Colonic mucosa (tissue), 4 donors: ENCODE measurements at regions of chr12 and their contacts with region 1.

Region 1: DNA sequence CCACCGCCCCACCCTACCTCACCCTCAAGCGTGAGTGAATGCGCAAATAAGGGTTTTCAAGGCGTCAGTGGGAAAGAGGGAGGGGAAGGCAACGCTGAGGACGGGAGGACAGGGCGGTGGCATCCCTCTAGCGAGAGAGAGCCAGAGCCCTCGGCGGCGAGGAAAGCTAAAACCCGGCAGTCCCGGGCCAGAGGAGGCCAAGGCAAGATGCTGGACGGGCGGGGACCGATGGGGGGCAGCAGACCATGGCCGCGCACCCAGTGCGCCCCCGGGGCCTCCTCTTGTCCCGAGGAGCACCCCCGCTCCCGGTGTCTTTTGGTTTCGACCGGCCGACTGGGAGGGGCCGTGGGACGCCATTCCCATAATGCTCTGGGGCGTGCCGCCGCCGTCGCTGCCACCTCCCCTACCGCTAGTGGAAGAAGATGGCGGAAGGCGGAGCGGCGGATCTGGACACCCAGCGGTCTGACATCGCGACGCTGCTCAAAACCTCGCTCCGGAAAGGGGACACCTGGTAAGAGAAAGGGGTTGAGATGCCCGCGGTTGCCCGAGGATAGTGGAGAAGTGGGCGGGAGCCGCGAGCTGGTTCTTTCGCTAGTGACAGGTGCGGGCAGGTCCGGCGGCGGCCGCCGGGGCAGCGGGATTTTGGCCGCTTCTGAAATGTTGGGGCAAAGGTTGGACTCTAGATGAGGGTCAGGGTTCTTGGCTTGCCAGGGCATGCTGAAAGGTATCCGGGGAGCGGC is at the start of gene USP15:
- DNase-seq: peak; percentile 95
- H3K4me3 ChIP-seq: peak within 1 kb of the TSS; percentile 96
- H3K27ac ChIP-seq: peak within 1 kb of the TSS; percentile 97
- H3K4me1 ChIP-seq: peaks cover 13% of the 10 kb centered on the region
- H3K27me3 ChIP-seq: no peaks in the 10 kb centered on the region
- CTCF ChIP-seq: peak; percentile 46
- total RNA-seq, gene USP15: 50.3 to 63.0 TPM

Region 2: GRCh38 chr12:62484233-62484632 is 224.1 kb after region 1 on chr12:
- intact Hi-C with region 1: no loop called
- DNase-seq: no peak
- H3K4me3 ChIP-seq: no peak overlapping the region
- H3K27ac ChIP-seq: no peak overlapping the region
- H3K4me1 ChIP-seq: no peaks in the 10 kb centered on the region
- H3K27me3 ChIP-seq: no peaks in the 10 kb centered on the region
- CTCF ChIP-seq: no peak

Region 3: DNA sequence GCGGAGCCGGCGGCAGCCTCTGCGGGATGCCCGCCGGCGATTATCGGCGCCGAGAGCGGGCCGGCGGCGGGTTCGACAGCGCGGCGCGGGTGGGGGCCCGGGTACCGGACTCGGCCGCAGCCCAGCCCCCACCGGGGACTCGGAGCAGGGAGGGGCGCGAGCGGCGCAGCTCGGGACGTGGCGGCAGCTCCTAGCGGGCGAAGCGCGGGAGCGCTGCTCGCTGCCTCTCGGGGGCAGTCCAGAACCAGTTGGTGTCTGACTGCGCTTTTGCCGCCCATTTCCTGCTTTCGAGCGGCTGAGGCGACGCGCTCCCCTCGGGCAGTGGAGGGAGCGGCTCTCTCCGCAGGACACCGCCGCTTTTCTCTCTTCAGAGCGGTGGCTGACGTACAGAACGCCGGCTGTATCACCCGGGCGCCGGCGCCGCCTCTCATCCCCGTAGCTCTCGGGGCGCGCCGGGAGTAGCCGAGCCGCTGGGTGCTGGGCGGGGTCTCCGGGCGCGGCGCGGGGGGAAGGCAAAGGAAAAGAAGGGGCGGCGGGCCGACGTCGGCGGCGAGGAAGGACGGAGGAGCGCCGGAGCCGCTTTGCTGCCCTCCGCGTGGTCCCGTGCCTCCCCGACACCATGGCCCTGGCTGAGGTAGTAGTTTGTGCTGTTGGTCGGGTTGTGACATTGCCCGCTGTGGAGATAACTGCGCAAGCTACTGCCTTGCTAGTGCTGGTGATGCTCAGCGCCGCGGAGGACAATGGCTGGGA is 343.1 kb after region 1 on chr12:
- intact Hi-C with region 1: loop called (anchors 5 kb)
- DNase-seq: peak; percentile 81
- H3K4me3 ChIP-seq: peak overlapping the region; percentile 69
- H3K27ac ChIP-seq: peak overlapping the region; percentile 99
- H3K4me1 ChIP-seq: no peaks in the 10 kb centered on the region
- H3K27me3 ChIP-seq: no peaks in the 10 kb centered on the region
- CTCF ChIP-seq: peak; percentile 28